ENCODE measurements at regions of chr19 and their contacts with region 1.

Region 1: DNA sequence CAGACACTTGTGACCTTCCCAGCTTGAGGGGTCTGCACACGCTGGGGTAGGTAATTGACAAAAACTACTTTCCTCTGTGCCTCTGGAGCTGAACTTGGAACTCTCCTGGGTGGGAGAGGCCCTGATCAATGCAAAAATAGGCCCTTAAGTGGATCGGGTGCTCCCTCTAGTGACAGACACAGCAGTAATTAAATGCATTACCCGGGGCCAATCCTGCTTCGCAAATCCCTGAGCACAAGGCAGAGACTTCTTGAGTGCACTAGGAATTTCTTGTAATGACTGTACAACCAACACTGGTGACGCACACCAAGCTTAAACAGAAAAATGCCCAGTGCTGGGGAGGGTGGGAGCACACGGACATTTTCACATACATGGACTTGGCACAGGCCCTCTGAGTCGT is 10.6 kb upstream of the UBE2S start:
- DNase-seq: peak; percentile 70

Region 2: GRCh38 chr19:55258828-55259539 is 159.2 kb before region 1 on chr19 and contains the start of gene PPP6R1:
- in situ Hi-C with region 1: loop called (anchors 10 kb)
- DNase-seq: peak; percentile 99
- total RNA-seq, gene PPP6R1: 104 and 109 TPM in 2 replicates

Region 3: DNA sequence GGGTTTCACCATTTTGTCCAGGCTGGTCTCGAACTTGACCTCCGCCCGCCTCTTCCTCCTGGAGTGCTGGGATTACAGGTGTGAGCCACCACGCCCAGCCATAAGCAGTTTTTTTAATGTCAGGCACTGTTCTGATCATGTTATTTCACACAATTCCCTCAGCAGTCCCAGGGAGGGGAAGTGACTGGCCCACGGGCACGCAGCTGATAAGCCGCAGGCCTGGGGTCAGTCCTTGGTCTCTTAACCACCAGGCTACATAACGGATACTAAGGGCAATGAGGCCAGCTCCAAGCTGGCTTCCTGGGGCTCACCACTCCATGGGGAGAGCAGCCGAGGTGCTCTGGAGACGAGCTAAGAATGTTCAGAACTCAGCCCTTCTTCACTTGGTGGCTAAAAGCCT is 120.9 kb before region 1 on chr19:
- in situ Hi-C with region 1: loop called (anchors 10 kb)
- DNase-seq: no peak

Region 4: GRCh38 chr19:55336101-55336500 is 82.1 kb before region 1 on chr19:
- in situ Hi-C with region 1: no loop called
- DNase-seq: no peak

Measured in G401 (cell line).